ENCODE measurements at regions of chr11 and their contacts with region 1.

Region 1: DNA sequence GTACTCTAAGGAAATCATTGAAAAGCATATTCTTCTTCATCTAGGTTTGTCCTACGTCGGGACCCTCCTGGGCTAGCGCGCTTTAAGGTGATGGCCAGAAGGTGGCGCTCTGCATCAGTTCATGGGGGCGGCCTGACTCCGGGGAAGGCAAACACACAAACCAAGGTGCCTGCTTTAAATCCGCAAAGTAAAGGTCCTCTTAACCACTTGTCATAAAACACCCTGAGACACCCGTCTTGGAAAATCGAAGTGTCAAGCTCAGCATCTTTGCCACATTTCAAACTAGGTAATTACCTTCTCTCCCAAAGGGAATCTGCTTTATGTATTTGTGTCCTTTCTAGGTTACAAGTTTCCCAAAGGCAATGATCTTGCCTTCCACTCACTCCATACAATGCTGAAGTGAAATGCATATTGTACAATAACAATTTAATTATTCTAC is 33.9 kb downstream of the LMO2 start:
- DNase-seq: peak; percentile 47 to 65 (median 54)
- H3K4me3 ChIP-seq: no peak overlapping the region
- H3K4me3 Mint-ChIP-seq: no peak overlapping the region
- H3K27ac ChIP-seq: no peak overlapping the region
- H3K27ac Mint-ChIP-seq: no peak overlapping the region
- H3K4me1 ChIP-seq: no peaks in the 10 kb centered on the region
- H3K4me1 Mint-ChIP-seq: no peaks in the 10 kb centered on the region
- H3K27me3 ChIP-seq: peaks cover 8% of the 10 kb centered on the region
- H3K27me3 Mint-ChIP-seq: peaks cover 33% of the 10 kb centered on the region in 2 donors

Region 2: GRCh38 chr11:33413301-33413700 is 444.7 kb before region 1 on chr11:
- CTCF ChIA-PET with region 1: no interaction called
- POLR2A ChIA-PET with region 1: no interaction called
- intact Hi-C with region 1: no loop called
- DNase-seq: no peak
- H3K4me3 ChIP-seq: no peak overlapping the region
- H3K4me3 Mint-ChIP-seq: no peak overlapping the region
- H3K27ac ChIP-seq: no peak overlapping the region
- H3K27ac Mint-ChIP-seq: no peak overlapping the region
- H3K4me1 ChIP-seq: no peaks in the 10 kb centered on the region
- H3K4me1 Mint-ChIP-seq: no peaks in the 10 kb centered on the region
- H3K27me3 ChIP-seq: no peaks in the 10 kb centered on the region
- H3K27me3 Mint-ChIP-seq: peaks cover 16 to 19% of the 10 kb centered on the region in 2 donors

Region 3: DNA sequence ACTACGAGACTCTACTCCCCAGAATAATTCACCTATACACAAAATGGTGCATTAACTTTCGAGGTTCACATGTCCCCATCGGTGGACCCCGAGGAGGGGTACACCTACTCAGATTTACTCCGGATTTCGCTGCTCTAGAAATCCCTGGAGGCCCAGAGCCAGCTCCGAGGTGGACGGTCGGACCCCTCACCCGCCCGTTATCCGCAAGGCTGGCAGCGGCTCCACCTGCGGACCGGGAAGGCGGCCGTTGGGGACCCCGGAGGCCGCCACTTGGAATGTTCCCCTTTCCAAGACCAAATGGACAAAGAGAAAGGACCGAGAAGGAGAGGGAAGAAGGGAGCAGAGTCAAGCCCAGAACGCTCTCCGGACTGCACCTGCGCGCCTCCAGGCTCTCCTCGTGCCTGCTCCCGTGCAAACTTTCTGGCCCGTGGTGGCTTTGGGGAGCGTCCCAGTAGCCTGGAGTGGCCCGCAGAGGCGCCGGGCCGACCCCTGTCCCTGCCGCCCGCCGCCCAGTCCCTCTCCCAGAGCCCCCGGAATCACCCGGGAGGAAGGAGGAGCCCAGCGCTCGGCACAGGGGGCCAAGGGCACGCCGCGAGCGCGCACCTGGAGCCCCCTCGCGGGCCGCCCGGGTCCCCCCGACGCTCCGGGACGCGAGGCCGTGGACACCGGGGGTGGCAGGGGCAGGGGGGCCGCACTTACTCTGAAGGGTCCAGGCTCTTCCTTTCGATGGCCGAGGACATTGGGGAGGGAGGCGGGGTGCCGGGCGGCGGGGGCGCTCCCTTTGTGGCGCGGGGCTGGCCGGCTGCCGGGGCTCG is 10.9 kb after region 1 on chr11:
- CTCF ChIA-PET with region 1: interaction called, 10 read pairs
- POLR2A ChIA-PET with region 1: interaction called, 5 read pairs
- intact Hi-C with region 1: no loop called
- DNase-seq: no peak
- H3K4me3 ChIP-seq: no peak overlapping the region
- H3K4me3 Mint-ChIP-seq: peak overlapping the region; percentile 30 to 90 (median 62)
- H3K27ac ChIP-seq: no peak overlapping the region
- H3K27ac Mint-ChIP-seq: no peak overlapping the region
- H3K4me1 ChIP-seq: peaks cover 16% of the 10 kb centered on the region
- H3K4me1 Mint-ChIP-seq: peaks cover 2 to 22% (median 13%) of the 10 kb centered on the region in 4 donors
- H3K27me3 ChIP-seq: peaks cover 22% of the 10 kb centered on the region
- H3K27me3 Mint-ChIP-seq: peaks cover 46 to 59% of the 10 kb centered on the region in 2 donors

Region 4: DNA sequence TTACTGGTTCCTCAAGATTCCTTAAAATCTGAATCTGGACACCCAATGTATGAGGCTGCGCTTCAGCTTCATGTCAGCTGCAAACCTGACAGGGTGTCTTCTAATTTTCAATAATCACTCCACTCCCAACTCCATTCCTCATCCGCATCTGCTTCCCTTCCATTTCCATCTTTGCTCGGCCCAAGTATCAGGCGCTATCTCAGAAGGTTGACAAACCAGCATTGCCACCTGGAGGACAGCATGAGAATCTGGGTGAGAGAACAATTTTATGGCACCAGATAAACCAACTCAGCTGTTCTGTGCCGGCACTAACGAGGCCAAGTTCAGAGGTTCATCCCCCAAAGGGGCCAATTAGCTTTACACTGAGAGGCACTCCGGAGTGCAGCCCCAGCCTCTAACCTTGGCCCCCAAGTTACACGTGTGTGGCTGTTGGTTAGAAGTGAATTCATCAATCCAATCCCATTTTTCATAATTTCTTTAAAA is 113.1 kb after region 1 on chr11:
- CTCF ChIA-PET with region 1: interaction called, 4 read pairs
- POLR2A ChIA-PET with region 1: no interaction called
- intact Hi-C with region 1: loop called (anchors 5 kb)
- DNase-seq: no peak
- H3K4me3 ChIP-seq: no peak overlapping the region
- H3K4me3 Mint-ChIP-seq: no peak overlapping the region
- H3K27ac ChIP-seq: no peak overlapping the region
- H3K27ac Mint-ChIP-seq: no peak overlapping the region
- H3K4me1 ChIP-seq: no peaks in the 10 kb centered on the region
- H3K4me1 Mint-ChIP-seq: no peaks in the 10 kb centered on the region
- H3K27me3 ChIP-seq: no peaks in the 10 kb centered on the region
- H3K27me3 Mint-ChIP-seq: peaks cover 2 to 13% of the 10 kb centered on the region in 2 donors

Region 5: GRCh38 chr11:33987975-33988580 is 130.1 kb after region 1 on chr11:
- CTCF ChIA-PET with region 1: interaction called, 24 read pairs
- POLR2A ChIA-PET with region 1: no interaction called
- intact Hi-C with region 1: loop called (anchors 1 kb)
- DNase-seq: peak; percentile 61 to 73 (median 67)
- H3K4me3 ChIP-seq: no peak overlapping the region
- H3K4me3 Mint-ChIP-seq: no peak overlapping the region
- H3K27ac ChIP-seq: no peak overlapping the region
- H3K27ac Mint-ChIP-seq: no peak overlapping the region
- H3K4me1 ChIP-seq: peaks cover 6% of the 10 kb centered on the region
- H3K4me1 Mint-ChIP-seq: peaks cover 3 to 7% (median 5%) of the 10 kb centered on the region in 4 donors
- H3K27me3 ChIP-seq: no peaks in the 10 kb centered on the region
- H3K27me3 Mint-ChIP-seq: peaks cover 1 to 8% of the 10 kb centered on the region in 2 donors

Measured in CD4-positive, alpha-beta memory T cell (primary cell).